PC-3 (cell line): ENCODE measurements at regions of chr1 and their contacts with region 1.

Region 1: DNA sequence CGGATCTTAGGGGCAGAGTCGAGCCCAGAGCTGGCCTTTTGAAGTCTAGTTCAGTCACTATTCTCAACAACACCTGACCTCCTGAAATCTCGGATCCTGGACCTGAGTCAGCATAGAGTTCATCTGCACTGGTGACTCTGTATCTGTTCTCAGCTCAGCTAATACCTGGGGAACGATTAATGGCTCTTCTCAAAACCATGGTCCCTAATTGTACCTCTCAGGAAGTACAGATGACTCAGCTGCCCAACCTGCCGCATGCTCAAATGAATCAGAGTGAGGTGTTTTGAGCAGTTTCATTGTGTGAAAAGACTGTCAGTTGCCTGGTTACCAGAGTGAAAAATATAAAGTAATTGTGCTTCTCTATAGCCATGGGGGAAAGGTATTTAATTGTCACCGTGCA is 89.2 kb downstream of the SLC35F3 start:
- DNase-seq: peak; percentile 99
- ATAC-seq: peak; percentile 85
- H3K4me3 ChIP-seq: no peak overlapping the region
- H3K27ac ChIP-seq: peak overlapping the region; percentile 97
- H3K4me1 ChIP-seq: peaks cover 62% of the 10 kb centered on the region
- H3K27me3 ChIP-seq: no peaks in the 10 kb centered on the region
- CTCF ChIP-seq: no peak

Region 2: GRCh38 chr1:233843525-233844204 is 150.0 kb before region 1 on chr1:
- CTCF ChIA-PET with region 1: no interaction called
- POLR2A ChIA-PET with region 1: no interaction called
- intact Hi-C with region 1: no loop called
- DNase-seq: peak; percentile 87
- ATAC-seq: peak; percentile 88
- H3K4me3 ChIP-seq: no peak overlapping the region
- H3K27ac ChIP-seq: no peak overlapping the region
- H3K4me1 ChIP-seq: peaks cover 8% of the 10 kb centered on the region; the same call in 1 of the 2 replicates
- H3K27me3 ChIP-seq: no peaks in the 10 kb centered on the region
- CTCF ChIP-seq: no peak

Region 3: GRCh38 chr1:233916706-233917105 is 76.9 kb before region 1 on chr1:
- CTCF ChIA-PET with region 1: no interaction called
- POLR2A ChIA-PET with region 1: no interaction called
- intact Hi-C with region 1: loop called (anchors 2 kb)
- DNase-seq: peak; percentile 97
- ATAC-seq: peak; percentile 94
- H3K4me3 ChIP-seq: peak overlapping the region; percentile 8; the same call in 1 of the 2 replicates
- H3K27ac ChIP-seq: peak overlapping the region; percentile 88
- H3K4me1 ChIP-seq: peaks cover 31% of the 10 kb centered on the region
- H3K27me3 ChIP-seq: no peaks in the 10 kb centered on the region
- CTCF ChIP-seq: peak; percentile 53; the same call in 1 of the 2 replicates

Region 4: DNA sequence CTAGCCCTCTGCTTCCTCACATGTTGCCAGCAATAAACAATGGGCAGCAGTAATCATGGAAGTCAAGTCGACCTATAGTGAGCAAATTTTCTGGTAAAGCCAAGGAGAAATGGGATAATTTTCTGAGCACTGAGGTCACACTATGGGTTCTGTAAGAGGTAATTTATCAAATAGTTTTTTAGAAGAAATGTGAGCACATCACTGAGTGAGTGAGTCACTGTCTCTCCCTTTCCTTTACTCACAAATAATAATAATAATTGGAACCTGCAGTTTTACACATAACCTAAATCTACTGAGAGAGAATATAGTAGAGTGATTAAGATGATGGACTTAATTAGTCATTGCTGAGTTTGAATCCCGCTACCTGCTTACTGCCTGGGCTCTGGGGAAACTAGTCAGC is 65.5 kb before region 1 on chr1:
- CTCF ChIA-PET with region 1: no interaction called
- POLR2A ChIA-PET with region 1: no interaction called
- intact Hi-C with region 1: no loop called
- DNase-seq: no peak
- ATAC-seq: no peak
- H3K4me3 ChIP-seq: no peak overlapping the region
- H3K27ac ChIP-seq: no peak overlapping the region
- H3K4me1 ChIP-seq: no peaks in the 10 kb centered on the region
- H3K27me3 ChIP-seq: no peaks in the 10 kb centered on the region
- CTCF ChIP-seq: no peak

Region 5: DNA sequence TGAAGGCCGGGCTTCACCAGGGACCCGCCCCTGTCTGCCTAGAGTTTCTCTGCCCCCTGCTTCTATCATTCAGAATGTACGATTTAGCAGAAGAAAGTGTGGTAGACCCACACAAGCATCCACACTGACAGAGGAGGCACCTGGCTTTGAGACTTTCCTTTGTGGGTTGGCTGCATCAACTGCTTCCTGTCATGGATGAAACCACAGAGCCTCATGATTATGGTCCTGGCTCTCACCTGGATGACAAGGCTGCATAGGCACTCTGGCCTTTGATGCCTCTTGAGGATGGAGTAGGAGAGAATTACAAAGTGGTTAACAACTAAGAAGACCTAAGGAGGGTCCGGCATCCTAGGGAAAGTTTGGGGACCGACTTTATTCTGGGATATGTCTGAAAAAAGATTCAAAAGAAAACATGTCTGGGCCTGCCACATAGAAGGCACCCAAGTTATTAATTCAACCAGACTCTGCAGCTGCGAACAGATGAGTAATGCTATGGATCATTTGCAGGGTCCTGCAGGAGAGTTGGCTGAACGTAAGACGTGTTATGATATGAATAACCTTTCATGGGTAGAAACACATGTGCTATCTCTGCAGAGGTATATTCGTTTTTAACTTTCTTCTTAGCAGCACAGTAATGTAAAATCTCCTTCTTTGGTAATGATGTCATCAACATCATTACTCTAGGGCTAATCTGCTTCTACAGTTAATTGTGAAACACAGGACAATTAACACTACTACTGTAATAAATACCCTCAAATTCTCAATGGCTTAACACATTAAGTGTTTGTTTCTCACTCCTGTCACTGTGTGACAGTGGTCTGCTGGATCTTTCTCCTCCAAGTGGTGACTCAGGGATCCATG is 47.0 kb after region 1 on chr1:
- CTCF ChIA-PET with region 1: no interaction called
- POLR2A ChIA-PET with region 1: no interaction called
- intact Hi-C with region 1: loop called (anchors 2 kb)
- DNase-seq: no peak
- ATAC-seq: no peak
- H3K4me3 ChIP-seq: no peak overlapping the region
- H3K27ac ChIP-seq: no peak overlapping the region
- H3K4me1 ChIP-seq: peaks cover 5% of the 10 kb centered on the region; the same call in 1 of the 2 replicates
- H3K27me3 ChIP-seq: no peaks in the 10 kb centered on the region
- CTCF ChIP-seq: no peak

Region 6: GRCh38 chr1:234047123-234047522 is 53.5 kb after region 1 on chr1:
- CTCF ChIA-PET with region 1: no interaction called
- POLR2A ChIA-PET with region 1: no interaction called
- intact Hi-C with region 1: loop called (anchors 1 kb)
- DNase-seq: peak; percentile 97
- ATAC-seq: peak; percentile 97
- H3K4me3 ChIP-seq: no peak overlapping the region
- H3K27ac ChIP-seq: peak overlapping the region; percentile 97
- H3K4me1 ChIP-seq: peaks cover 33% of the 10 kb centered on the region
- H3K27me3 ChIP-seq: no peaks in the 10 kb centered on the region
- CTCF ChIP-seq: no peak

Region 7: GRCh38 chr1:234108921-234109320 is 115.3 kb after region 1 on chr1:
- CTCF ChIA-PET with region 1: no interaction called
- POLR2A ChIA-PET with region 1: no interaction called
- intact Hi-C with region 1: loop called (anchors 5 kb)
- DNase-seq: peak; percentile 93
- ATAC-seq: peak; percentile 93
- H3K4me3 ChIP-seq: no peak overlapping the region
- H3K27ac ChIP-seq: peak overlapping the region; percentile 86
- H3K4me1 ChIP-seq: peaks cover 26% of the 10 kb centered on the region
- H3K27me3 ChIP-seq: no peaks in the 10 kb centered on the region
- CTCF ChIP-seq: no peak